MCF 10A (cell line): ENCODE measurements at regions of chr12 and their contacts with region 1.

Region 1: DNA sequence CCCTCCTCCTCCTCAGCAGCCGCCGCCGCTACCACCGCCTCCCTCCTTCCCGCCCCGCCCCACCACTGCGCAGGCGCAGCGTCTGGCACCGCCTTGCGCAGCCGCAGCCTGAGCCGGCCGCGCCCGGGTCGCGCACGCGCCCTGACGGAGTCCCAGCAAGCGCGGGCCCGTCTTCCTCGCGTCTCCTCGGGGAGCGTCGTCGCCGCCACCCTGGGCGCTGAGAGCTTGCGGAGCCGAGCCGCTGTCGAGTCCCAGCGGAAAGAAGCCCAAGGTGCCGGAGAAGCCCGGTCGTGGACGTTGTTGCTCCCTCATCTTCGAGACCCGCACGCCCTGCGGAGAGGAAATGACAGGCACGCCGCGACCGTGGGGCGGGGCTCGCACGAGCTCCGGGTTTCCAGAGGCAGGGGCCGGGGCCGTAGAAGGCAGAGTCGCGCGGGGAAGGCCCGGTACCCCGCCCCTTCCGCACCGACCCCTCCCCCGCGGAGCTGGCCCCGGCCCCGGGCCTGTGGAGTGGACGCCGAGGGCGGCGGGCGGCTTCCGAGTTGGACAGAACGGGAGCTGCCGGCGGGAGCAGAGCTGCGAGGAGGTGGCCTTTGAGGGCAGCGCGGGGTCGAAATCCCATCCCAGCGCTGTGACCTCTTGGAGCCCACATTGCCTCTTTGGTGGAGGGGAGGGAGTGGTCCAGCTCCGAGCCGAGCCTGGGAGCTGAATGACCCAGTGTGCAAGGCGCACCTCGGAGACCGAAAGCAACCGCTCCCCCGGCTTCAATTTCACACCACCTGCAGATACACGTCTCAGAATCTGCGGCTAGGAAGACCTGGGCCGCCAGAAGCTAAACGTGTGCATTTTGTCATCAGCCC is 469 bp upstream of the RAB35 start:
- DNase-seq: peak; percentile 92
- H3K4me3 Mint-ChIP-seq: peak overlapping the region; percentile 83
- H3K27ac Mint-ChIP-seq: peak overlapping the region; percentile 95
- H3K4me1 Mint-ChIP-seq: peaks cover 44% of the 10 kb centered on the region
- H3K27me3 Mint-ChIP-seq: no peaks in the 10 kb centered on the region
- CTCF ChIP-seq: no peak

Region 2: DNA sequence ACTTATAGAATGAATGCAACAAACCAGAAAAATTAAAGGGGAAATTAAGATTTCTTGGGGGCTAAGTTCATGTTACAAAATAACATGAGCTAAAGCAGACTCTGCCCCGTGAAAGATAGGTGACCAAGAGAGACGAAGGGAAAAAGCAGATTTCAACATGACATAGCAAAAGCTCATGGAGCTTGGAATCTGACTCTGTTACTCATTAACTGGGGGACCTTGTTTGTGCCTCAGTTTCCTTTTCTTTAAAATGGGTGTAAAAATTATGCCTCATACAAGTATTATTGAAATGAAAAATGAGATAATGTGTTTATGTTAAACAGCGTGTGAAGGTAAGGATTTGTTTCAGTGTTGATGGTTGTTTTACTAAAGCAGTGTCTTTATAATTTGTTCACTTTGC is 116.5 kb before region 1 on chr12:
- CTCF ChIA-PET with region 1: no interaction called
- POLR2A ChIA-PET with region 1: interaction called, 10 read pairs
- intact Hi-C with region 1: no loop called
- DNase-seq: no peak
- H3K4me3 Mint-ChIP-seq: no peak overlapping the region
- H3K27ac Mint-ChIP-seq: no peak overlapping the region
- H3K4me1 Mint-ChIP-seq: no peaks in the 10 kb centered on the region
- H3K27me3 Mint-ChIP-seq: no peaks in the 10 kb centered on the region
- CTCF ChIP-seq: no peak

Region 3: GRCh38 chr12:120079411-120080026 is 37.5 kb before region 1 on chr12:
- CTCF ChIA-PET with region 1: interaction called, 3 read pairs
- POLR2A ChIA-PET with region 1: interaction called, 15 read pairs
- intact Hi-C with region 1: no loop called
- DNase-seq: peak; percentile 43
- H3K4me3 Mint-ChIP-seq: no peak overlapping the region
- H3K27ac Mint-ChIP-seq: peak overlapping the region; percentile 6
- H3K4me1 Mint-ChIP-seq: peaks cover 15% of the 10 kb centered on the region
- H3K27me3 Mint-ChIP-seq: no peaks in the 10 kb centered on the region
- CTCF ChIP-seq: no peak

Region 4: DNA sequence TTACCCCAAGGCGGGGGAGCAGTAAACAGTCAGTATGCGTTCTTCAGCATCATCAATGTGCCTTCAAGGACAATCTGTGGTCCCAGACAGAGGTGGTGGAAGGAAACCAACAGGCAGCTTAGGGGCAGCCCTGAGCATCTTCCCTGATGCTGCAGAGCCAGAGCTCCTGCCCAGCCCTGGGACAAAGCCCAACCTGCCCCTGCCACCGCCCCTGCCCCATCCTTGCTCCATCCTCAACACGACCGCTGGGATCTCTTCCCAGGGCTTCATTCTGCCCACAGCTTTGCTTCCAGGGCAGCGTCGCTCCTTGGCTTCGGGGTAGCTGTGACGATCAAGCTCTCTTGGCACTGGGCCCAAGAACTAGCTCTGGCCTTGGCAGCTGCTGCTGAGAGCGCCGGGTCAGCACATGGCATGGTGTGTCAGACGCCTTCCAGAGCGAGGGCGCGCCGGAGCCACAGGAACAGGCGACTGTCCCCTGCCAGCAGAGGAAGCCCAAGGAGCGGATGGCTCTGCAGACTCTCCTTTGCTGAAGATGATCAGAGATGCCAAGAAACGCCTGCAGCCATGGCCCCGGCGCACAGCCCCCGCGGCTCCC is 16.5 kb before region 1 on chr12:
- CTCF ChIA-PET with region 1: interaction called, 4 read pairs
- POLR2A ChIA-PET with region 1: interaction called, 10 read pairs
- intact Hi-C with region 1: no loop called
- DNase-seq: no peak
- H3K4me3 Mint-ChIP-seq: no peak overlapping the region
- H3K27ac Mint-ChIP-seq: no peak overlapping the region
- H3K4me1 Mint-ChIP-seq: peaks cover 7% of the 10 kb centered on the region
- H3K27me3 Mint-ChIP-seq: no peaks in the 10 kb centered on the region
- CTCF ChIP-seq: no peak

Region 5: DNA sequence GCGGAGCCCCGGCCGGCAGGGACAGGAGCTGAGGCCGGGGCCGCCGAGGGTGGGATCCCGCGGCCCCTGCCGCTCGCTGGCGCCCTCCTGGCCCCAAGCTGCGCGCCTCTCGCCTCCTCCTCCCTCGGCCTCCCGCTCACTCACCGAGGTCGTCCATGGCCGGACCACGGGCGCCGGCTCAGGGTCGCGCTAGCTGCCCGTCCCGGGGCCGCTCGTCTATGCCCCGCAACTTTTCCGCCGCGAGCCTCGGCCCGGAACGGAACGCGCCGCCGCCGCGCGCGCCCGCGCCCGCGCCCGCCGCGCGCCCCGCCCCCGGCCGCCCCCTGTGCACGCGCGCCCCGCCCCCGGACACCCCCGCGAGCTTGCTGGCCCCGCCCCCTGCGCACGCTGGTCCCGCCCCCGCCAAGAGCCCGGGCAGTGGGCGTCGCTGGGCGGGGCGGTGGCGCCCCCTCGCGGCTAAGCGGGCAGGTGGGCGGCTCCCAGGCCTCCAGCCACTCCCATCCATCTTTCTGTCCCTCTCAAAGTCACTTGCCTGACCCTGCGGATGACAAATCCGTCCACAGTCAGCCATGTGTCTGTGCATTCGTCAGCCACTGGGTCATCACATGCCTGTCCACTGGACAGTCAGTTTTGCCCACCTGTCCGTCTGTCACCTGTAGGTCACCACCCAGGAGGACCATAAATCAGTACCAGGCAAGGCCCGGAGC is 148.6 kb after region 1 on chr12 and contains the start of gene PXN:
- CTCF ChIA-PET with region 1: interaction called, 3 read pairs
- POLR2A ChIA-PET with region 1: interaction called, 16 read pairs
- intact Hi-C with region 1: loop called (anchors 10 kb)
- DNase-seq: peak; percentile 72
- H3K4me3 Mint-ChIP-seq: peak within 1 kb of the TSS; percentile 95
- H3K27ac Mint-ChIP-seq: peak within 1 kb of the TSS; percentile 94
- H3K4me1 Mint-ChIP-seq: peaks cover 28% of the 10 kb centered on the region
- H3K27me3 Mint-ChIP-seq: no peaks in the 10 kb centered on the region
- CTCF ChIP-seq: peak; percentile 84
- total RNA-seq, gene PXN: 216 and 256 TPM in 2 replicates